SK-N-SH (cell line): ENCODE measurements at regions of chr16 and their contacts with region 1.

Region 1: DNA sequence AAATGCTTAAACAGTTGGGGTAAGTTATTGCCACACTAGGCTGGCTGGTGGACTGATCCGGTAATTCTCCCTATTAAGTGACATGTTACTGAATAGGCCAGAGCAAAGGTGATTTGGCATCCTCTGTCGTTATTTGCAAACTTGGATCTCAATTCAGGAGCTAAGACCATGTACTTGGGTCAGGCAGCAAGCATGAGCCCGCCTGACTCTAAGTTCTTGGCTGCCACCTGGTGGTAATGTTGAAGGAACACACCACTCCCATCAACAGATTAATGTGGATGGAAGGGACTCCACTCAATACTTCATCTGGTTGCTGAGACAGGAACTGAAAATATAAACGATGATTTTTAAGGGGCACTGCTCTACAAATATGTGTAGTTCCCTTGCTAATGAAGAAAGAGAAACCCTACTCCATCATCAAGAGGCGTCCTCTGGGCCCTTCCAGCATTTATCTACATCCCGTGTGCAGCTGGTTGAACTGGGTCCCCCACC is 70.8 kb downstream of the EMP2 start:
- DNase-seq: peak; percentile 77
- H3K4me3 ChIP-seq: peak overlapping the region in 1 of 2 experiments; percentile 21; a peak in 1 of 4 replicates
- H3K27ac ChIP-seq: no peak overlapping the region
- H3K4me1 ChIP-seq: no peaks in the 10 kb centered on the region; a peak in 1 of 4 replicates
- H3K27me3 ChIP-seq: no peaks in the 10 kb centered on the region
- CTCF ChIP-seq: peak; percentile 78
- EP300 ChIP-seq: no peak
- RAD21 ChIP-seq: peak; percentile 96

Region 2: DNA sequence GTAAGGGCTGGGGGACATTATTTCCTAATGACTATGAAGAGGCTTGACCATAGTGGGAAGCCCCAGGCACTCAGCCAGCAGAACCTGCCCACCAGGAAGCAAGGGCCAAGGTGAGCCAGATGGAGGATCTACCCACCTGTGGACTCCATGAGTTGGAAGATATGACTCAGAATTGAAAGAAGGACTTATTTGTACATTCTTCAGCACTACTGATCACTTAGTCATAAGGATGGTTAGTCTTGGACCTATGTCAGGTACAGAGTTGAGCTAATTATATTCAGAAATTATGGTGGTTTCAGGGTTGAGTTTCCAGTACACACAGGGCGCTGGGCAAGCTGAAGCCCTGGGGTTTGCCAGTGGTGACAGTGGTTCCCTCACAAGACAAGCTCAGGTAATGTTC is 303.4 kb before region 1 on chr16:
- CTCF ChIA-PET with region 1: no interaction called
- POLR2A ChIA-PET with region 1: no interaction called
- DNase-seq: no peak
- H3K4me3 ChIP-seq: no peak overlapping the region
- H3K27ac ChIP-seq: no peak overlapping the region
- H3K4me1 ChIP-seq: no peaks in the 10 kb centered on the region
- H3K27me3 ChIP-seq: no peaks in the 10 kb centered on the region
- CTCF ChIP-seq: no peak
- EP300 ChIP-seq: no peak
- RAD21 ChIP-seq: no peak

Region 3: DNA sequence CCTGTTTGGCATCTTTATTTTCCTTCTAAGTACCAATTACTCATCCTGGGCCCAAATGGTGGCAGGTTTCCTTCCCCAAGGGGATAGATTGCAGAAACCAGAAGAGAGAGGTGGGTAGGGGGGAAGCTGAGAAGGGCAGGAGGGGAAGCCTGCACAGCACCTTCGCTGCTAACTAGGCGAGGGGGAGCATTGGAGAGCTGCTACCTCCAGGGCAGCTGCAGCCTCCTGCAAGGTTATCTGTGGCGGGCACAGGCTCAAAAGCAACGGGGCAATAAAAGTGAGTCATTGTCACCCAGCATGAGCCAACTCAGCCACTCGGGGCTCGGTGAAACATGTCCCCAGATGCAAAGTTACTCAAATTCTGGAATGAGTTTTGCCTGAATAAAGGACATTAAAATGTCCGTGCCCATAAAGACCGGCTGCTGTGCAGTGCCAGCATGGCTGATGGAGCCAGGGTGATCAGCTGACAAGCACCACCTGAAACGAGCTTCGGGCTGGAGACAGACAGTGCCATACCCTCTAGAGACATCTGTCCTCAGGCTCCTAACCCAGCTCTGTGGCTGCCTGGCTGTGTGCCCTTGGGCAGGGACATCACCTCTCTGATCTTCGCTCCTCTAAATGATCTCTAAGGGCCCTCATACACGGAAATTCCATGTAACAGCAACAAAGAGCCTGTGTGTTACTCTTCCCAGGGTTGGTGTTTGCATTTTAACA is 259.3 kb before region 1 on chr16:
- CTCF ChIA-PET with region 1: interaction called, 49 read pairs
- POLR2A ChIA-PET with region 1: no interaction called
- DNase-seq: no peak
- H3K4me3 ChIP-seq: no peak overlapping the region
- H3K27ac ChIP-seq: no peak overlapping the region
- H3K4me1 ChIP-seq: no peaks in the 10 kb centered on the region; a peak in 1 of 4 replicates
- H3K27me3 ChIP-seq: no peaks in the 10 kb centered on the region
- CTCF ChIP-seq: no peak
- EP300 ChIP-seq: no peak
- RAD21 ChIP-seq: no peak

Region 4: DNA sequence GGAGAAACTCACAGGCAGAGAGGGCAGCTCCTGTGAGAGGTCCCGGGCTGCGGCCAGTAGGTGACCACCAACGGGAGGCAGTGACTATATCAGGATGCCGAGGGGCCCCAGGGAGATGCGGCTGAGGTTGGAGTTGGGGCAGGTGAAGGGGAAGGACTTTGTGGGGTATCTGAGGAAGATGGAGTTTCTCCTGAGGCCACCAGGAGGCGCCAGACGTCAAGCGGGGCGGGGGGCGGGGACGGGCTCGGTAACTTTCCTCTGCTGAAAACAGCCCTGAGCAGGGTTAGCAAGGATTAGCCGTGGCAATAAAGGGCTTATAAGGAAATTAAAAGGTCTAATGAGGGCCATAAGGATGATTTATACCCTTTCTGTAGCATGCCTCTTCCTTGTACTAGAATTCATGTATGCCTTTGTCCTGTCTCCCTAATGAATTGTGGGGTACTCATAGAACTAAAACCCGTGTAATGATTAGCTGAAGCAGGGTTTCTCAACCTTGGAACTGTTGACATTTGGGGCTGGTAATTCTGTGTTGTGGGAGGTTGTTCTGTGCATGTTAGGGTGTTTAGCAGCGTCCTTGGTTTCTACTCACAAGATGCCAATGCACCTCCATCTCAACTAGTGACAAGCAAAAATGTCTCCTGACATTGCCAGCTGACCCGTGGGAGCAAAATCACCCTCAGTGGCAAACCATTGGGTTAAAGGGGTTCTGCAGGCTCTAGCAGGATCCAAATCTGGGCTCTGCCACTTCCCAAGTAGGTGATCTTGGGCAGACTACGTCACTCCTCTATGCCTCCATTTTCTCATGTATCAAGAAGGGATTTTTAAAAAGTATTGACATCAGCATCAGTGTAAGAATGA is 252.6 kb before region 1 on chr16:
- CTCF ChIA-PET with region 1: interaction called, 49 read pairs
- POLR2A ChIA-PET with region 1: no interaction called
- DNase-seq: peak; percentile 86
- H3K4me3 ChIP-seq: peak overlapping the region in 1 of 2 experiments; percentile 19; a peak in 1 of 4 replicates
- H3K27ac ChIP-seq: no peak overlapping the region
- H3K4me1 ChIP-seq: no peaks in the 10 kb centered on the region; a peak in 1 of 4 replicates
- H3K27me3 ChIP-seq: no peaks in the 10 kb centered on the region
- CTCF ChIP-seq: peak; percentile 48
- EP300 ChIP-seq: no peak
- RAD21 ChIP-seq: peak; percentile 65

Region 5: GRCh38 chr16:10314811-10315210 is 194.8 kb before region 1 on chr16:
- CTCF ChIA-PET with region 1: interaction called, 23 read pairs
- POLR2A ChIA-PET with region 1: no interaction called
- DNase-seq: peak; percentile 8
- H3K4me3 ChIP-seq: no peak overlapping the region
- H3K27ac ChIP-seq: no peak overlapping the region
- H3K4me1 ChIP-seq: no peaks in the 10 kb centered on the region
- H3K27me3 ChIP-seq: no peaks in the 10 kb centered on the region
- CTCF ChIP-seq: no peak
- EP300 ChIP-seq: no peak
- RAD21 ChIP-seq: peak; percentile 52

Region 6: DNA sequence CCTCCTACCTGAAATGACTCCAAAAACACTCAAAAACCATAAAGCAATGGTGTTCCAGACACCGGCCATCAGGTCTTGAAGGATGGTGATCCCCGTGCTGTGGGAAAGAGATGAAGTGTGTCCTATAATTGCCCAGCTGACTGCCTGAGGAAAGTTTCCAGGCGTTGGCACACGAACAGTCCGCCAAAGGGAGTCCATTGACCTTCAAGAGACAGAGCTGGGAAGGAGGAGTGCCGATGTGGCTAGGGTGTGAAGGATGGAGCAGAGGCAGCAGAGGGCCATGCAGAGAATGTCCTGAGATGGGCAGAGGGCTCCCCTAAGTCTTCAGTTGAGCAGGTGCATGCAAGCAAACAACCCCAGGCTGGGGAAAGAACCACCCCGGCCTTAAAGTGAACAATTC is 222.2 kb after region 1 on chr16:
- CTCF ChIA-PET with region 1: interaction called, 305 read pairs
- POLR2A ChIA-PET with region 1: no interaction called
- DNase-seq: no peak
- H3K4me3 ChIP-seq: no peak overlapping the region
- H3K27ac ChIP-seq: no peak overlapping the region
- H3K4me1 ChIP-seq: peaks cover 0 to 8% of the 10 kb centered on the region in 2 experiments; a peak in 1 of 4 replicates
- H3K27me3 ChIP-seq: no peaks in the 10 kb centered on the region
- CTCF ChIP-seq: no peak
- EP300 ChIP-seq: no peak
- RAD21 ChIP-seq: no peak

Region 7: GRCh38 chr16:10743610-10744393 is 234.2 kb after region 1 on chr16 and contains the start of gene NUBP1:
- CTCF ChIA-PET with region 1: interaction called, 305 read pairs
- POLR2A ChIA-PET with region 1: no interaction called
- DNase-seq: peak; percentile 92
- H3K4me3 ChIP-seq: peak within 1 kb of the TSS; percentile 60 to 66
- H3K27ac ChIP-seq: peak within 1 kb of the TSS; percentile 96 to 97
- H3K4me1 ChIP-seq: peaks cover 5 to 34% of the 10 kb centered on the region in 2 experiments; a peak in 3 of 4 replicates
- H3K27me3 ChIP-seq: no peaks in the 10 kb centered on the region
- CTCF ChIP-seq: no peak
- EP300 ChIP-seq: no peak
- RAD21 ChIP-seq: no peak
- polyA plus RNA-seq, gene NUBP1: 40.7 and 49.8 TPM in 2 replicates

Region 8: GRCh38 chr16:11396241-11397048 is 886.9 kb after region 1 on chr16:
- CTCF ChIA-PET with region 1: no interaction called
- POLR2A ChIA-PET with region 1: no interaction called
- DNase-seq: peak; percentile 97
- H3K4me3 ChIP-seq: no peak overlapping the region
- H3K27ac ChIP-seq: peak overlapping the region in 1 of 2 experiments; percentile 25; a peak in 1 of 4 replicates
- H3K4me1 ChIP-seq: peaks cover 0 to 12% of the 10 kb centered on the region in 2 experiments; a peak in 1 of 4 replicates
- H3K27me3 ChIP-seq: no peaks in the 10 kb centered on the region
- CTCF ChIP-seq: peak; percentile 94
- EP300 ChIP-seq: no peak
- RAD21 ChIP-seq: peak; percentile 98